Panc1 (cell line): ENCODE measurements at regions of chr16 and their contacts with region 1.

Region 1: GRCh38 chr16:52805556-52806168 is 247.0 kb downstream of the CHD9NB start:
- DNase-seq: no peak
- ATAC-seq: no peak
- H3K4me3 ChIP-seq: no peak overlapping the region
- H3K27ac ChIP-seq: no peak overlapping the region
- H3K4me1 ChIP-seq: no peaks in the 10 kb centered on the region
- H3K27me3 ChIP-seq: no peaks in the 10 kb centered on the region
- CTCF ChIP-seq: no peak

Region 2: DNA sequence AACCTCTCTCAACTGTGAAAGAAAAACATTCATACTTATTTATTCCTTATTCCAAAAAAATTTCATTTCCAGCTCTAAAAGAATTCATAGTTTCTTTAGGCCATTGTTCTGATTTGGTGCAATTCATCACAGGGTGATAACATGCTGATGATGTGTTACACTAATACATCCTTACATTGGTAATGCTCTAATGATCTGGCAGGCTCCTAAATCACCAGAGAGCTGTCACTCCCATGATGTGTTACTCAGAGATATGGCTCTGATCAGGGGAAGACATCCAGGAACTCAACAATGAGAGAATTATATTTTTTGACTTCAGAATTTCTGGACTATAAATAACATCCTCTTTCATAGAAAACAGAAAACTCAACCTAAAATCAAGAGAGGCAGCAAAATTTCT is 37.7 kb after region 1 on chr16:
- CTCF ChIA-PET with region 1: no interaction called
- POLR2A ChIA-PET with region 1: no interaction called
- in situ Hi-C with region 1: no loop called
- intact Hi-C with region 1: loop called (anchors 1 kb)
- DNase-seq: no peak
- ATAC-seq: no peak
- H3K4me3 ChIP-seq: no peak overlapping the region
- H3K27ac ChIP-seq: no peak overlapping the region
- H3K4me1 ChIP-seq: no peaks in the 10 kb centered on the region
- H3K27me3 ChIP-seq: no peaks in the 10 kb centered on the region
- CTCF ChIP-seq: no peak